Sigmoid colon (tissue), 7 donors: ENCODE measurements at regions of chr3 and their contacts with region 1.

Region 1: DNA sequence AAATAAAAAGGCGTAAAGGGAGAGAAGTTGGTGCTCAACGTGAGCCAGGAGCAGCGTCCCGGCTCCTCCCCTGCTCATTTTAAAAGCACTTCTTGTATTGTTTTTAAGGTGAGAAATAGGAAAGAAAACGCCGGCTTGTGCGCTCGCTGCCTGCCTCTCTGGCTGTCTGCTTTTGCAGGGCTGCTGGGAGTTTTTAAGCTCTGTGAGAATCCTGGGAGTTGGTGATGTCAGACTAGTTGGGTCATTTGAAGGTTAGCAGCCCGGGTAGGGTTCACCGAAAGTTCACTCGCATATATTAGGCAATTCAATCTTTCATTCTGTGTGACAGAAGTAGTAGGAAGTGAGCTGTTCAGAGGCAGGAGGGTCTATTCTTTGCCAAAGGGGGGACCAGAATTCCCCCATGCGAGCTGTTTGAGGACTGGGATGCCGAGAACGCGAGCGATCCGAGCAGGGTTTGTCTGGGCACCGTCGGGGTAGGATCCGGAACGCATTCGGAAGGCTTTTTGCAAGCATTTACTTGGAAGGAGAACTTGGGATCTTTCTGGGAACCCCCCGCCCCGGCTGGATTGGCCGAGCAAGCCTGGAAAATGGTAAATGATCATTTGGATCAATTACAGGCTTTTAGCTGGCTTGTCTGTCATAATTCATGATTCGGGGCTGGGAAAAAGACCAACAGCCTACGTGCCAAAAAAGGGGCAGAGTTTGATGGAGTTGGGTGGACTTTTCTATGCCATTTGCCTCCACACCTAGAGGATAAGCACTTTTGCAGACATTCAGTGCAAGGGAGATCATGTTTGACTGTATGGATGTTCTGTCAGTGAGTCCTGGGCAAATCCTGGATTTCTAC is at the start of gene RARB:
- DNase-seq: peak; percentile 92
- H3K4me3 ChIP-seq: peak within 1 kb of the TSS; percentile 62 to 73 (median 70)
- H3K27ac ChIP-seq: peak within 1 kb of the TSS; percentile 87 to 95 (median 91)
- H3K4me1 ChIP-seq: peaks cover 0 to 54% (median 42%) of the 10 kb centered on the region in 4 donors
- H3K27me3 ChIP-seq: no peaks in the 10 kb centered on the region
- CTCF ChIP-seq: no peak
- EP300 ChIP-seq: peak in 3 of 4 donors; percentile 17 to 81 (median 25)
- POLR2A ChIP-seq: peak; percentile 94 to 95
- total RNA-seq, gene RARB: 8.3 to 18.5 (median 11.9) TPM

Region 2: GRCh38 chr3:25021816-25022215 is 406.3 kb before region 1 on chr3:
- intact Hi-C with region 1: loop called (anchors 10 kb)
- DNase-seq: no peak
- H3K4me3 ChIP-seq: no peak overlapping the region
- H3K27ac ChIP-seq: no peak overlapping the region
- H3K4me1 ChIP-seq: no peaks in the 10 kb centered on the region
- H3K27me3 ChIP-seq: no peaks in the 10 kb centered on the region
- CTCF ChIP-seq: peak in 3 of 4 experiments; percentile 30 to 48 (median 37)
- EP300 ChIP-seq: no peak
- POLR2A ChIP-seq: no peak

Region 3: GRCh38 chr3:25468866-25469319 is 40.7 kb after region 1 on chr3:
- intact Hi-C with region 1: loop called (anchors 5 kb)
- DNase-seq: peak; percentile 89
- H3K4me3 ChIP-seq: no peak overlapping the region
- H3K27ac ChIP-seq: peak overlapping the region in 3 of 4 donors; percentile 49 to 72 (median 71)
- H3K4me1 ChIP-seq: peaks cover 0 to 63% (median 57%) of the 10 kb centered on the region in 4 donors
- H3K27me3 ChIP-seq: no peaks in the 10 kb centered on the region
- CTCF ChIP-seq: peak in 1 of 4 experiments; percentile 35
- EP300 ChIP-seq: peak in 1 of 4 donors; percentile 28
- POLR2A ChIP-seq: no peak

Region 4: DNA sequence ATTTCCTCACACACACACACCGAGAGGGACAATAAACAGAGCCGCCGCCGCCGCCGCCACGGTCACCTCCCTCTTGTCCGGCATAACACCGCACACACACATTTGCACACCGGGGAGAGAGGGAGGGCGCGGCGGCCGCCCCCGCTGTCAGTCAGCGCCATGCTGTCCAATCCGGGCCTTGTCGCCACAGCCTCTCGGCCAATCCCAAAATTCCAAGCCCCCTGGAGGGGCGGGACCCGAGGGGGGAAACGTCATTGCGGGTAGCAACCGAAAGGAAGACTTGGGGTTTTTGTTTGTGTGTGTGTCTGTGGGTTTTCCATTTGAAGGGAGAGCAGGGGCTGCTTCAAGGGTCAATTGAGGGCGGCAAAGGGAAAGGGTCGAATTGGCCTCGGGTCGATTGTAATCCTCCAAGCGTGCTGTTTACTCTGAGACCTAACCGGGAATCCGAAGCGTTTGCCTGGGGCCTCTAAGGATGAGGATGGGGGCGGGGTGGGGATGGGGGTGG is 236.7 kb after region 1 on chr3 and contains the start of gene TOP2B:
- intact Hi-C with region 1: loop called (anchors 10 kb)
- DNase-seq: peak; percentile 98
- H3K4me3 ChIP-seq: peak within 1 kb of the TSS; percentile 78 to 92 (median 82)
- H3K27ac ChIP-seq: peak within 1 kb of the TSS; percentile 95 to 98 (median 96)
- H3K4me1 ChIP-seq: peaks cover 0 to 41% (median 33%) of the 10 kb centered on the region in 4 donors
- H3K27me3 ChIP-seq: no peaks in the 10 kb centered on the region
- CTCF ChIP-seq: no peak
- EP300 ChIP-seq: no peak
- POLR2A ChIP-seq: peak; percentile 81 to 86
- total RNA-seq, gene TOP2B: 89.5 to 122 (median 111) TPM